ENCODE measurements at regions of chr5 and their contacts with region 1.

Region 1: GRCh38 chr5:109388407-109388806 is 21.4 kb downstream of the PJA2 start:
- DNase-seq: peak; percentile 19 to 53 (median 36)
- ATAC-seq: peak; percentile 67
- H3K4me3 ChIP-seq: no peak overlapping the region
- H3K27ac ChIP-seq: peak overlapping the region; percentile 67
- H3K4me1 ChIP-seq: peaks cover 0 to 16% of the 10 kb centered on the region in 2 experiments; a peak in 3 of 5 replicates
- H3K27me3 ChIP-seq: no peaks in the 10 kb centered on the region
- CTCF ChIP-seq: no peak
- EP300 ChIP-seq: no peak
- POLR2A ChIP-seq: no peak
- RAD21 ChIP-seq: no peak

Region 2: DNA sequence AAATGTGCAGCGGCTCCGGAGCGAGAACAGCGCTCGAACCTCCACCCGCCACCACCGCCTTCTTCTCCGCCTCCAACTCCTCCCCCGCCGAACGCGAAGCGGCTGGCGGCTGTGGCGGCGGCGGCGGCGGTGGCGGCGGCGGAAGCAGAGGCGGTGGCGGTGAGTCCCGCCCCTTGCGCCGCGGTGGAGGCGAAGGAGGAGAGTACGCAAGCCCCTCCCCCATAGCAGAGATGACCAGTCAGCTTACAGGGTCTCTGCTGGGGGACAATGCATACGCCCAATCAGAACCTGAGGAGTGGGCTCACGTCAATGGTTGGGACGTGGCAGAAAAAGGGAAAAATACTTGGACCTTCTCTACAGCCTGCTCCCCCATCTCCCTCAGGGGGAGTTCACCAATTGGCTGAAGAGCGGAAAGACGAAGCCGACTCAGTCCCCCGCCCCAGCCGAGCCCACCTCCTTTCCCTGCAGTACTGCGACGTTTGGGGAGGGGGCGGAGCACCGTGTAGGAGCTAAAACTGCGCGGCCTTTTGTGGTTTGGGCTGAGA is 21.5 kb after region 1 on chr5 and contains the start of gene PJA2:
- CTCF ChIA-PET with region 1: no interaction called
- POLR2A ChIA-PET with region 1: interaction called, 3 read pairs
- in situ Hi-C with region 1: no loop called
- intact Hi-C with region 1: loop called (anchors 1 kb)
- DNase-seq: peak; percentile 94 to 98 (median 96)
- ATAC-seq: peak; percentile 87
- H3K4me3 ChIP-seq: peak within 1 kb of the TSS; percentile 85
- H3K27ac ChIP-seq: peak within 1 kb of the TSS; percentile 99
- H3K4me1 ChIP-seq: peaks cover 3 to 12% of the 10 kb centered on the region in 2 experiments; a peak in 4 of 5 replicates
- H3K27me3 ChIP-seq: no peaks in the 10 kb centered on the region
- CTCF ChIP-seq: peak; percentile 28 to 33 (median 31); a peak in 4 of 6 replicates
- EP300 ChIP-seq: no peak; the same call in 1 of the 2 replicates
- POLR2A ChIP-seq: no peak
- RAD21 ChIP-seq: peak; percentile 12 to 19; a peak in 2 of 4 replicates
- polyA plus RNA-seq, gene PJA2: 31.2 to 50.1 TPM

Region 3: GRCh38 chr5:109562441-109562840 is 174.0 kb after region 1 on chr5:
- CTCF ChIA-PET with region 1: no interaction called
- POLR2A ChIA-PET with region 1: no interaction called
- in situ Hi-C with region 1: no loop called
- intact Hi-C with region 1: no loop called
- DNase-seq: no peak
- ATAC-seq: no peak
- H3K4me3 ChIP-seq: no peak overlapping the region
- H3K27ac ChIP-seq: no peak overlapping the region
- H3K4me1 ChIP-seq: peaks cover 0 to 16% of the 10 kb centered on the region in 2 experiments; a peak in 3 of 5 replicates
- H3K27me3 ChIP-seq: no peaks in the 10 kb centered on the region
- CTCF ChIP-seq: no peak
- EP300 ChIP-seq: no peak
- POLR2A ChIP-seq: no peak
- RAD21 ChIP-seq: no peak